ENCODE measurements at regions of chr1 and their contacts with region 1.

Region 1: GRCh38 chr1:34786521-34787325 is 5.7 kb downstream of the GJB3 start:
- DNase-seq: peak; percentile 79
- ATAC-seq: peak; percentile 67
- H3K4me3 Mint-ChIP-seq: no peak overlapping the region
- H3K27ac Mint-ChIP-seq: no peak overlapping the region
- H3K4me1 Mint-ChIP-seq: peaks cover 9% of the 10 kb centered on the region; the same call in 1 of the 2 replicates
- H3K27me3 Mint-ChIP-seq: peaks cover 33% of the 10 kb centered on the region
- CTCF ChIP-seq: peak; percentile 68

Region 2: GRCh38 chr1:34796990-34797389 is 10.3 kb after region 1 on chr1:
- CTCF ChIA-PET with region 1: interaction called, 15 read pairs
- POLR2A ChIA-PET with region 1: no interaction called
- DNase-seq: no peak
- ATAC-seq: no peak
- H3K4me3 Mint-ChIP-seq: no peak overlapping the region
- H3K27ac Mint-ChIP-seq: no peak overlapping the region
- H3K4me1 Mint-ChIP-seq: peaks cover 17% of the 10 kb centered on the region
- H3K27me3 Mint-ChIP-seq: peaks cover 21% of the 10 kb centered on the region
- CTCF ChIP-seq: no peak

Region 3: GRCh38 chr1:34844252-34844634 is 57.5 kb after region 1 on chr1:
- CTCF ChIA-PET with region 1: interaction called, 11 read pairs
- POLR2A ChIA-PET with region 1: no interaction called
- DNase-seq: peak; percentile 28
- ATAC-seq: peak; percentile 50
- H3K4me3 Mint-ChIP-seq: no peak overlapping the region
- H3K27ac Mint-ChIP-seq: no peak overlapping the region; the same call in 1 of the 2 replicates
- H3K4me1 Mint-ChIP-seq: peaks cover 38% of the 10 kb centered on the region
- H3K27me3 Mint-ChIP-seq: no peaks in the 10 kb centered on the region
- CTCF ChIP-seq: no peak

Region 4: DNA sequence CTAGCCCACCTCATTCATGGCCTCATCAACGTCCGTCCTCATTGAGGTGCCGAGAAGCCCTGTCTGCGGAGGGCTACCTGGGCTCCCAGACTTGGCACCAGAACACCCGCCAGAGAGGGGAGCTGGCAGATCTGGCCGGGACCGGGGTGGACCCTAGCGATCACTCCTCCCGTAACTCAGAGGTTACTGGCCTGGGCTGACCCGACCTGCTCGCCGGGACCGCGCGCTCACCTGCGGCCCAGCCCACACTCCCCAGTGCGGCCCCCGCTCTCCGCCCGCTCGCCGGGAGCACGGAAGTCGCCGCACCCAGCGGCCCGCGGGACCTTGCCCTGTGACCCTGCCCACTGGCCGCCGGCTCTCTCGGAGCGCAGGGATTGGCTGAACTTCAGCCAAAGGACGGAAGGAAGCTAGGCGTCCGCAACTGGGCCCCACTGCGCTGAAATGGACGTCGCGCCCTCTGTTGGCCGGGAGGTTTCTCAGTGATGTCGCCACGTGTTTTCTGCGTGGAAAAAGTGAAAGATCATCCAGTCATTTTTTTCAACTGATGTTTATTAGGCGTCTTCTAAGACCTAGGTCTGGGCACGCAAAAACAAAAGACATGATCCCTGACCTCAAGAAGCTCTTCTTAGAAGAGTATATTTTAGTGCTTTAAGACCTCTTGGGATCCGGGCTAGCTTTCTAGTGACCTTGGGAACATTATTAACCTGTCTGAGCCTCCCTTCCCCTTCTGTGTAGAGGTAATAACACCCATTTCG is 72.9 kb after region 1 on chr1 and contains the start of gene SMIM12:
- CTCF ChIA-PET with region 1: interaction called, 16 read pairs
- POLR2A ChIA-PET with region 1: no interaction called
- DNase-seq: peak; percentile 90
- ATAC-seq: peak; percentile 99
- H3K4me3 Mint-ChIP-seq: peak within 1 kb of the TSS; percentile 98
- H3K27ac Mint-ChIP-seq: peak within 1 kb of the TSS; percentile 68; the same call in 1 of the 2 replicates
- H3K4me1 Mint-ChIP-seq: peaks cover 11% of the 10 kb centered on the region
- H3K27me3 Mint-ChIP-seq: peaks cover 25% of the 10 kb centered on the region
- CTCF ChIP-seq: peak; percentile 15; the same call in 1 of the 2 replicates
- total RNA-seq, gene SMIM12: 34.6 to 41.9 TPM (median 39.6 TPM) in 3 replicates

Region 5: DNA sequence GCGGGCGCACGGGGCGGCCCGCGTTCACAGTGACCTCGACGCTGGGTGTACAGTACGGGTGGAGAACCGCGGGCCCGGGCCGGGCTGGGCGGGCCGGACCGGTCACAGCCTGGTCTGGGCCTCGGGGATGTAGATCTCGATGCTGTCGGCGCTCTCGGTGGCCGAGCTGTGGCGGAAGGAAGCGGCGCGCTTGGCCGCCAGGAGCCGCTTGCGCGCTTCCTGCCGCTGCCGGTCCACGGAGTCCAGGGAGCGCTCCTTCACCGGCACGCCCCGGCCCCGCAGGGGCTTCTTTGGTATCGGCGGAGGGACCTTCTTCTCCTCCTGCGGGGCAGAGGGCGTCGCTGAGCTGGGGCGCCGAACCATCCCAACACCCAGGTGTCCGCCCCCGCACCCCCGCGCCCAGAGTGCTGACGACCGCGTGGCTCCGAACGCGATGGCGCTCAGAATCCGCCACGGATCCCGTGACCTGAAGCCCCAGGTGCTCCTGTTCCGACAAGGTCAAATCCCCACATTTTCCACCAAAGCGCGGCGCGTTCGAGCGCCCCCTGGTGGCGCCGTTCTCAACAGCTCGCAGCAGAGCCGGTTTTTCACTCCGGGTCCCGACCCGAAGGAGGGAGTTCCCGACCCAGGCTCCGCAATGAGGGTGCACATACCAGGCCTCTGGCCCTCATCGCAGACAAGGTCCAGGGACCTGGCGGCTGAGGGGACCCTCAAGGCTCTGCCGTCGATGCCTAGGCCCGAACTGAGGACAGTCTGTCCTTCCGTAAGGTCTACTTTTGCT is 79.4 kb after region 1 on chr1:
- CTCF ChIA-PET with region 1: interaction called, 18 read pairs
- POLR2A ChIA-PET with region 1: no interaction called
- DNase-seq: peak; percentile 93
- ATAC-seq: peak; percentile 78
- H3K4me3 Mint-ChIP-seq: peak overlapping the region; percentile 73
- H3K27ac Mint-ChIP-seq: no peak overlapping the region
- H3K4me1 Mint-ChIP-seq: 0 out of 2 replicates have a peak, but pooled peaks cover 2% of the 10 kb centered on the region
- H3K27me3 Mint-ChIP-seq: peaks cover 45% of the 10 kb centered on the region
- CTCF ChIP-seq: peak; percentile 99

Region 6: DNA sequence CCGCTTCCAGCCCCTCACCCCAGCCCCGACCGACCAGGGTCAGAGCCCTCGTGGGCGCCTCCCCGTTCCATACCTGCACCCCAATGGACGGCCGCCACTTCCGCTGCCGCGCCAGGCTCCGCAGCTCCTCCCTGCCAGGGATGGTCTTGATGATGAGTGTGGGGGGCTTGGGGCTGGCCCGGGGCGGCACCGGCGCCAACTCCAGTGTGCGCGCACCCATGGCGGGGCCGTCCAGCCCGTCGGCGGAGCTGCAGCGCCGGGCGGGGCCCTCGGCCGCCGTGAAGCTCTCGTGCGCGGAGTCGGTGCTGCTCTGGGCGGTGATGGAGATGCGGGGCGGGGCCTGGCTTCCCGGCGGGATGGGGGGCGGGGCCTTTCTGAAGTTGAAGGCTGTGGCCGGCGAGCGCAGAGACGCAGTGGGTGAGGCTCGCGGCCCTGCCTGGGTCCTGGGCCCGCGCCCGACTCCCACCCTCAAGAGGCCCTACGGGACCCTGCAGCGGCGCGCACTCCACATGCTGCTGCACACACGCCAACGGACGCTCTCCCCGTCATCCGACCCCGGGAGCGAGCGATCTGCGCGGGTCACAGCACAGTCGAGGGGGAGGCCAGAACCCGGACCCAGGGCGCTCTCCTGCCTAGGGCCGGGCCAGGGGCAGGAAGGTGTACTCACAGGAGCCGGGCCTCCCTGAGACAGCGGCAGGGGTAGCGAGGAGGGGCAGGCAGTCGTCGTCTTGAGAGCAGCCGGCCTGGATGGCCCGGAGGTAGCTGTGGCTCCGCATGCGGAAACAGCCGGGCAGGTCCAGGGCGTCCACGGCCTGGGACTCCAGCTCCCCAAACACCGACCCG is 98.9 kb after region 1 on chr1:
- CTCF ChIA-PET with region 1: interaction called, 12 read pairs
- POLR2A ChIA-PET with region 1: no interaction called
- DNase-seq: peak; percentile 88
- ATAC-seq: peak; percentile 88
- H3K4me3 Mint-ChIP-seq: peak overlapping the region; percentile 88
- H3K27ac Mint-ChIP-seq: no peak overlapping the region
- H3K4me1 Mint-ChIP-seq: peaks cover 7% of the 10 kb centered on the region; the same call in 1 of the 2 replicates
- H3K27me3 Mint-ChIP-seq: peaks cover 40% of the 10 kb centered on the region
- CTCF ChIP-seq: no peak

Region 7: DNA sequence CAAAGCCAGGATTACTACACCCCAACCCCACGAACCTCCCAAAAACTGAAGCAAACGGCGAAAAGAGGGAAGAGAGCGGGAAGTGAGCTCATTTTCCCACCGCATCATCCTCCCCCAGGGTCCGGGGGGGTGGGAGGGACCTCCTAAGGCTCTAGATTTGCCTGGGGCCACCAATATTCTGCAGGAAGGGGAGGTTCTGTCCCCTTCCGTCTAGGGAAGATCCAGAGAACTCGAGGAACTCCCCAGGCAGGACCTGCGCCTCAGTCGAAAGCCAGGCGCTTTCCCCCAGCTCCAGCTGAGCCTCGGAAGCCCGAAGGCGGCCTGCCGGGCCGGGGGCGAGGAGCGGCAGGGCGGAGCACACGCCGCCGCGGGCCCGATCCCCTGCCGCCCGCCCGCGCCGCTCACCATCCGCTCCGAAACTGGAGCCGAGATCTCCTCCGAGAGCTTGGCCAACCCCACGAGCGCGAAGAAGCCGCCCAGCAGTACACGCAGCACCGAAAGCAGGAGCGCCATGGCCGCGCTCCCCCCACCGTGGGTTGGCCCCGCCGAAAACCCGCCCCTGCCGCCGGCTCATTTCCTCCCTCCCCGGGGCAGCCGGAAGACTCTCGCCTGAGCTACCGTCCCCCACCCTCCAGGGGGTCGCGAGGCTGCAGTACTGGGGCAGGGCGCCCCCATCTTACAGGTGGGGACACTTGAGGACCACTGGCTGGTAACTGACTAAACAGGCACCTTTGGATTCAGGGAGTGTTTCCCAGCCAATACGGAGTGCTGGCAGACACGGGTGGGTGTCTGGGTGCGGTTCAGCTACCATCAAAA is 198.3 kb after region 1 on chr1 and contains the start of gene TMEM35B:
- CTCF ChIA-PET with region 1: interaction called, 10 read pairs
- POLR2A ChIA-PET with region 1: no interaction called
- DNase-seq: peak; percentile 71
- ATAC-seq: peak; percentile 78
- H3K4me3 Mint-ChIP-seq: peak within 1 kb of the TSS; percentile 92
- H3K27ac Mint-ChIP-seq: peak within 1 kb of the TSS; percentile 79; the same call in 1 of the 2 replicates
- H3K4me1 Mint-ChIP-seq: peaks cover 11% of the 10 kb centered on the region
- H3K27me3 Mint-ChIP-seq: no peaks in the 10 kb centered on the region
- CTCF ChIP-seq: no peak
- total RNA-seq, gene TMEM35B: 8.7 to 11.0 TPM (median 10.6 TPM) in 3 replicates